Heart right ventricle (tissue), 16 donors: ENCODE measurements at regions of chr15 and their contacts with region 1.

Region 1: GRCh38 chr15:97504031-97504792 is 456.3 kb upstream of the ARRDC4 start:
- DNase-seq: no peak
- ATAC-seq: no peak
- H3K4me3 ChIP-seq: no peak overlapping the region
- H3K27ac ChIP-seq: no peak overlapping the region
- H3K4me1 ChIP-seq: peaks cover 0 to 6% (median 0%) of the 10 kb centered on the region in 9 donors
- H3K27me3 ChIP-seq: no peaks in the 10 kb centered on the region
- CTCF ChIP-seq: no peak

Region 2: DNA sequence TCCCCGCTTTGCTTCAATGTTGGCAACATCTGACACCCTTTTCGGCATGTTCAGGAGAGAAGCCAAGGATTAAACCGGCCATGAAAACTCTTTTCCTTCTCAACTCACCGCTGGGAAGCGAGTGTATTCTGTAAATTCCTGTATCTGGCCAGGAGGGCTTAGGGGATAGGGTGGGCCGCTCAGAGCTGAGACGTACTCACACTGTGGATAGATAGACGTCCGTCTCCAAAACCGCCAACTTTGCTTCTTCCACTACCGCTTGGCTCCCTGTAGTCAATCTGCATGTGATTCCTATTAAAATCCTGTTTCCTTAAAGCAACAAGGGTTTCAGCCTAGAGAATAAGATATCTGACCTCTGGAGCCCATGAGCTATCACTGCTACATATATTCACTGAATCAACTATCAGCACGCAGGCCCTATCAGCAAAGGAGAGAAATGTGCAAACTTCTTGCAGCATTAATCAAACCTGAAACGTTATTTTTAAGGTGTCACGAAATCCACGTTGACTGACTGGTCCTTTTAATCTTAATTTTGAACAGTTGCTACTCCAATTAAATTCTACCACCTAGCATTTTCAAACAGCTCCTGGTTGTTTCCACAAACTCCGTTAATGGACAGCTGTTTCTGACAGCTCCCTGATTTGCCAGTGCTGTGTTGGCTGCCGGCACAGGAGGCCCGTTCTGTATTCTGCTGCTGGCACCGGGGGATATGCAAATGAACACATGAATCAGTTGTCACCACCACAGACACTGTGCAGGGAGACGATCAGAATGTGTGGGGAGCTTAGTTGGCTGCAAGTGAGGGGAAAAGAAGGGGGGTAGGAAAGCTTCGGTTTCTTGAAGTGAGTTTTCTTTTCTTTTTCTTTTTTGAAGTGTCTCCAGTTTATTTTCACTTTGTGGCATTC is 17.4 kb after region 1 on chr15:
- intact Hi-C with region 1: loop called in 1 of 10 experiments (anchors 1 kb)
- DNase-seq: peak; percentile 45 to 80
- ATAC-seq: peak; percentile 82 to 98 (median 96)
- H3K4me3 ChIP-seq: peak overlapping the region; percentile 13 to 53 (median 42)
- H3K27ac ChIP-seq: peak overlapping the region; percentile 26 to 88 (median 78)
- H3K4me1 ChIP-seq: peaks cover 0 to 24% (median 6%) of the 10 kb centered on the region in 9 donors
- H3K27me3 ChIP-seq: no peaks in the 10 kb centered on the region
- CTCF ChIP-seq: no peak